Endothelial cell of umbilical vein (primary cell): ENCODE measurements at regions of chr1 and their contacts with region 1.

Region 1: GRCh38 chr1:85628791-85629531 is 48.4 kb downstream of the CCN1 start:
- DNase-seq: peak; percentile 81
- H3K4me3 ChIP-seq: peak overlapping the region in 1 of 3 experiments; percentile 7
- H3K27ac ChIP-seq: peak overlapping the region; percentile 76
- H3K4me1 ChIP-seq: peaks cover 25% of the 10 kb centered on the region
- H3K27me3 ChIP-seq: no peaks in the 10 kb centered on the region
- CTCF ChIP-seq: no peak
- POLR2A ChIP-seq: no peak

Region 2: DNA sequence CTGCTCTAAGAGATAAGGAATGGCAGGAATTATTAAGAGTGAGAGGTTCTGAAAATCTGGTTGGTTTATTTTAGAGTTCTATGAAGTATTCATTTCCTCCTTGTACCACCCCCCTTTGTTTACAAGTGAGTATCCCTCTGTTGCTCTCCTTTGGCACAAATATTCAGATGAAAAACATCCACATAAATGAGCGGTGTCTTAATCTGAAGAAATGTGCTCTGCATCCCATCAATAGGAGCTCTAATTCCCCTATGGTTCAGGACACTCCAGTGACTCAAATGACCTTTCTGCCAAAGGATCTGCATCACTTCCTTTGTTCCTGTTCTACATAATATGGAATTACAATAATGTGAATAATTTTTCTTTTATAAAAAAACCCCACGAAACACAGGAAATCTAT is 180.6 kb before region 1 on chr1:
- CTCF ChIA-PET with region 1: no interaction called
- POLR2A ChIA-PET with region 1: no interaction called
- dilution Hi-C with region 1: no loop called
- intact Hi-C with region 1: loop called (anchors 5 kb)
- DNase-seq: peak; percentile 91
- H3K4me3 ChIP-seq: no peak overlapping the region
- H3K27ac ChIP-seq: peak overlapping the region; percentile 98
- H3K4me1 ChIP-seq: peaks cover 34% of the 10 kb centered on the region
- H3K27me3 ChIP-seq: no peaks in the 10 kb centered on the region
- CTCF ChIP-seq: no peak
- POLR2A ChIP-seq: no peak

Region 3: DNA sequence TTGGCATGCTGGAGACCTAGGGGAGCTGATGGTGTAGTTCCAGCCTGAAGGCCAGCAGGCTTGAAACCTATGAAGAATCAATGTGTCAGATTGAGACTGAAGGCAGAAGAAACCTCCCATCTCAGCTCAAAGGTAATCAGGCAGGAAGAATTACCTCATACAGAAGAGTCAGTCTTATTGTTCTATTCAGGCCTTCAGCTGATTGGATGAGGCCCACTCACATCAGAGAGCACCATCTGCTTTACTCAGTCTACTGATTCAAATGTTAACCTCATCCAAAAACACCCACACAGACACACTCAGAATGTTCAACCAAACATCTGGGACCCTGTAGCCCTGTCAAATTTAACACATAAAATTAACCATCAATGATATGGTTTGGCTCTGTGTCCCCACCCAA is 62.1 kb before region 1 on chr1:
- CTCF ChIA-PET with region 1: no interaction called
- POLR2A ChIA-PET with region 1: no interaction called
- dilution Hi-C with region 1: no loop called
- intact Hi-C with region 1: no loop called
- DNase-seq: no peak
- H3K4me3 ChIP-seq: no peak overlapping the region
- H3K27ac ChIP-seq: no peak overlapping the region
- H3K4me1 ChIP-seq: peaks cover 47% of the 10 kb centered on the region
- H3K27me3 ChIP-seq: no peaks in the 10 kb centered on the region
- CTCF ChIP-seq: no peak
- POLR2A ChIP-seq: no peak

Region 4: DNA sequence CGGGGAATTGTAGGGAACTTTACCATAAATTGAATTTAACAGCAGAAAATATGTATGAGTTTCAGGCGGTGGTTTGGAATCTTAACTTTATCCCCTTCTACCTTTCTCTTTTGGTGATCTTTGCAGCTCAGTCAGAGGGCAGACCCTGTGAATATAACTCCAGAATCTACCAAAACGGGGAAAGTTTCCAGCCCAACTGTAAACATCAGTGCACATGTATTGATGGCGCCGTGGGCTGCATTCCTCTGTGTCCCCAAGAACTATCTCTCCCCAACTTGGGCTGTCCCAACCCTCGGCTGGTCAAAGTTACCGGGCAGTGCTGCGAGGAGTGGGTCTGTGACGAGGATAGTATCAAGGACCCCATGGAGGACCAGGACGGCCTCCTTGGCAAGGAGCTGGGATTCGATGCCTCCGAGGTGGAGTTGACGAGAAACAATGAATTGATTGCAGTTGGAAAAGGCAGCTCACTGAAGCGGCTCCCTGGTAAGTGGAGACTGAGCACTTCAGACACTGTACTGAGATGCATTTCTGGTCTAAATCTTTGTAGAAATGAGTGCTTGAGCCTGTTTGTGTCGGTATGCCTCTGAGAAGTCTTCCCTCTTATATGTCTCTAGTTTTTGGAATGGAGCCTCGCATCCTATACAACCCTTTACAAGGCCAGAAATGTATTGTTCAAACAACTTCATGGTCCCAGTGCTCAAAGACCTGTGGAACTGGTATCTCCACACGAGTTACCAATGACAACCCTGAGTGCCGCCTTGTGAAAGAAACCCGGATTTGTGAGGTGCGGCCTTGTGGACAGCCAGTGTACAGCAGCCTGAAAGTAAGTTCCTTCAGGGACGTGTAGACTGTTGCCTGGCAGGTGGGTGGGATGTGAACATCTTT is 46.9 kb before region 1 on chr1:
- CTCF ChIA-PET with region 1: interaction called, 17 read pairs
- POLR2A ChIA-PET with region 1: interaction called, 30 read pairs
- dilution Hi-C with region 1: no loop called
- intact Hi-C with region 1: loop called (anchors 1 kb)
- DNase-seq: peak; percentile 54
- H3K4me3 ChIP-seq: peak overlapping the region; percentile 57 to 98 (median 78)
- H3K27ac ChIP-seq: peak overlapping the region; percentile 92
- H3K4me1 ChIP-seq: peaks cover 16% of the 10 kb centered on the region
- H3K27me3 ChIP-seq: no peaks in the 10 kb centered on the region
- CTCF ChIP-seq: peak in 1 of 2 donors; percentile 7
- POLR2A ChIP-seq: peak; percentile 45

Region 5: DNA sequence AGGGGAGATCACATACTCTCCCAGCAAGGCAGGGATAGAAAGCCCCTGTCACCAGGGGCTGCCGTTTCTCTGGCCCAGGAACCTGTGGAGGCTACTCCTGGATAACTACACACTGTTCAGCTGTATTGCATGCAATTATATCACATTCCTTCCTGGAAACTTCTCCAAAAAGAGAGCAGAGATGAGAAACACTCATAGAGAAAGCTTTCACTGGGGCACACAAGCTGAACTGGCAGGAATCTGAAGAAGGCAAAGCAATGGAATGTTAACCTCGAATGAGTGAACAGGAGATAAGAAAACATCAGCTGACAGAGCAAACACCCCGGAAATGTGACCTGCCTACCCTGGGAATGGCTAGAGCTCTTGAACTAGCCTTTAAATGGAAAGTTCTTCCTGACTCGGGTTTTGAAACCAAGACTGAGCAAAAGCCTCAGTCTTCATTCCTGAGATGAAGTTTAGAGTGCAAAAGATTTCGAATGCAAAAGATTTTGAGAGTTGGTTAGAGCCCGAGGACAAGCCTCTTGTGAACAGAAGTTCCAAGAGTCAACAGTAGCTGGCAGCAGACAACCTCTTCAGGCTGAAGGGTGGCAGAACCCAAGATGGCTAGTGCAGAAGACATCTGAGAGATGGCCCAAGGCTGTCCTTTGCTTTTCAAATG is 16.1 kb before region 1 on chr1:
- CTCF ChIA-PET with region 1: interaction called, 16 read pairs
- POLR2A ChIA-PET with region 1: interaction called, 3 read pairs
- dilution Hi-C with region 1: no loop called
- intact Hi-C with region 1: no loop called
- DNase-seq: peak; percentile 24
- H3K4me3 ChIP-seq: no peak overlapping the region
- H3K27ac ChIP-seq: no peak overlapping the region
- H3K4me1 ChIP-seq: peaks cover 18% of the 10 kb centered on the region
- H3K27me3 ChIP-seq: no peaks in the 10 kb centered on the region
- CTCF ChIP-seq: peak; percentile 36 to 41
- POLR2A ChIP-seq: no peak

Region 6: GRCh38 chr1:85898861-85899260 is 269.9 kb after region 1 on chr1:
- CTCF ChIA-PET with region 1: no interaction called
- POLR2A ChIA-PET with region 1: no interaction called
- dilution Hi-C with region 1: no loop called
- intact Hi-C with region 1: no loop called
- DNase-seq: no peak
- H3K4me3 ChIP-seq: no peak overlapping the region
- H3K27ac ChIP-seq: no peak overlapping the region
- H3K4me1 ChIP-seq: no peaks in the 10 kb centered on the region
- H3K27me3 ChIP-seq: peaks cover 4 to 5% of the 10 kb centered on the region in 2 experiments
- CTCF ChIP-seq: no peak
- POLR2A ChIP-seq: no peak